ENCODE measurements at regions of chr10 and their contacts with region 1.

Region 1: DNA sequence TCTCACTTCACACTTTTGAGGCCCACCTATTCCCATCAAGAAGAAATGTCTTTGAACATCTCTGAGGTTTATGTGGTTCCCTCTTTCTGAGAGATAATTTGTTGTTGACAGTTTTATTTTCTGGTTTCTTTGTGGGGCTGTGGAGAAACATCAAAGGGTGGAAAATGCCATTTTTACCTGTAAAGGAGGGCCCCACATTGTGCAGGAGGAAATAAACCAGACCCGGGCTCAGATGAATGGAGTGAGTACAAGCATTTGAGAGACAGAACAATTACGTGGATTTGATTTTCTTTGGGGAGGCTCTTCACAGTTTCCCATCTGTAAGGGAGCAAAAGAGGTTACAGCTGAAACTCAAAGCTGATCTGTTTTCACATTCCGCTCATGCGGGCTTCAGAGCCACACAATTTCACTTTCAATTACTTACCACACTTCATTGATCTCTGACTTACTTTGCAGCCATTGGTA is 29.8 kb downstream of the ITPRIP start:
- DNase-seq: peak in 5 of 14 experiments; percentile 40 to 56 (median 54)
- ATAC-seq: peak; percentile 69
- H3K4me3 ChIP-seq: no peak overlapping the region
- H3K4me3 Mint-ChIP-seq: peak overlapping the region; percentile 63
- H3K27ac ChIP-seq: peak overlapping the region in 1 of 2 donors; percentile 44
- H3K27ac Mint-ChIP-seq: peak overlapping the region; percentile 71
- H3K4me1 ChIP-seq: peaks cover 78% of the 10 kb centered on the region
- H3K4me1 Mint-ChIP-seq: peaks cover 83% of the 10 kb centered on the region
- H3K27me3 ChIP-seq: no peaks in the 10 kb centered on the region
- H3K27me3 Mint-ChIP-seq: no peaks in the 10 kb centered on the region
- CTCF ChIP-seq: no peak

Region 2: DNA sequence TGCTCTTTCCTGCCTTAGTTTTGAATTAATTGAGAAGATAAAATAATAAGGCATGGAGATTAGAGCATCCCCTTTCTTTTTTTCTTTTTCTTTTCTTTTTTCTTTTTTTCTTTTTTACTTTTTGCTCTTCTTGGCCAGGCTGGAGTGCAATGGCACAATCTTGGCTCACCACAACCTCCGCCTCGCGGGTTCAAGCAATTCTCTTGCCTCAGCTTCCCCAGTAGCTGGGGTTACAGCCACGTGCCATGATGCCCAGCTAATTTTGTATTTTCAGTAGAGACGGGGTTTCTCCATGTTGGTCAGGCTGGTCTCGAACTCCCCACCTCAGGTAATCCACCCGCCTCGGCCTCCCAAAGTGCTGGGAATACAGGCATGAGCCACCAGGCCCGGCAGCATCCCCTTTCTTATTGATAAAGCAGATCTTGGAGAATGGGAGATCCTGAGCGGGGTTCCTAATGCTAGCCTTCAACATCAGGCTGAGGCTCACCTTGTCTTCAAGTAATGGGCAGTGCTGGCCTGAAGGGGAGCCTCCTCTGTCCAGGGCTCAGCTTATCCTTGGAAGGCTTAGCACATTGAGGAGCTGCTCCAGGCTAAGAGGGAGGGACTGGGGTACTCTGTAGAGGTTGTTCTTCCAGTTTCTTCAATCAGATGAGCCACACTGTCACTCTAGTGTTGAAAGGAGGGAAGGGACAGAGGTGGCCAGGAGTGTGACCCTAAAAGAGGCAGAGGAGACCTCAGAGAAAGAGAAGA is 11.6 kb before region 1 on chr10:
- CTCF ChIA-PET with region 1: interaction called, 37 read pairs
- POLR2A ChIA-PET with region 1: interaction called, 9 read pairs
- intact Hi-C with region 1: no loop called
- DNase-seq: no peak
- ATAC-seq: no peak
- H3K4me3 ChIP-seq: no peak overlapping the region
- H3K4me3 Mint-ChIP-seq: no peak overlapping the region
- H3K27ac ChIP-seq: no peak overlapping the region
- H3K27ac Mint-ChIP-seq: no peak overlapping the region
- H3K4me1 ChIP-seq: peaks cover 14% of the 10 kb centered on the region
- H3K4me1 Mint-ChIP-seq: peaks cover 35% of the 10 kb centered on the region
- H3K27me3 ChIP-seq: no peaks in the 10 kb centered on the region
- H3K27me3 Mint-ChIP-seq: no peaks in the 10 kb centered on the region
- CTCF ChIP-seq: no peak

Region 3: DNA sequence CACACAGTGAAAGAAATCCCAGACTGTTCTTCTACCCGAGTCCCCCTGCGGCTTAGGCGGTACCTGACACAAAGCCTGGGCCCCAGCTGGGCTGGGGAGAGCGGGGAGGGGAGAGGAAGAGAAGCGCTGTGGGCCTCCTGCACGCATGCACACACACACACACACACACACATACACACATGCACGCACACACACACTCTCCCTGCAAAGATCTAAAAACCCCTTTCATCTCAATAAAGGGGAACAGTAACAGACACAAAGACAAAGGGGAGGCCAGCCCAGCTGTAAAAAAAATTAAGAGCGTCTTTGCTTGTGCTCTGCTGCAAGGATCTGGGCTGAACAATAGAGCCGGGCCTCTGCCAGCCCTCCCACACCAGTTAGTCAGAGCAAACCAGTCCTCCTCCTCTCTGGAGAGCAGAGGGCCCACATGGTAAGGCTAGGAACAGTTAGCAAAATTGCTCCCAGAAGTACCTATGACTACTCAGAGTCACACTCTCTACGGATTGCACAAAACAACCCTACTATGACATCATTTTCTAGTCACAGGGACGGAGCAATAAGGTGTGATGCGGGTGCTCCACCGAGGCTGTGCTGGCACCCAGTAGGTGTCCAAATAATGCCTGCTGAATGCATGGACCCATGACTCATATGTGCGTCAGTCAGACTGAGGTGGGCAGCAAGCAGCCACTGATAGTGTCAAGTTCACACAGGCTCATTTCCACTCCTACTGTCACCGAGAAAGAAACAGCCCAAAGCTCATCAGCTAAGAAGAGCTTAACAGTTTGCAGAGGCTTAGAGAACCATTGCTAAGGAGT is 20.6 kb after region 1 on chr10:
- CTCF ChIA-PET with region 1: interaction called, 15 read pairs
- POLR2A ChIA-PET with region 1: interaction called, 99 read pairs
- intact Hi-C with region 1: loop called in 1 of 2 experiments (anchors 2 kb)
- DNase-seq: peak; percentile 44 to 88 (median 70)
- ATAC-seq: peak; percentile 65
- H3K4me3 ChIP-seq: peak overlapping the region; percentile 41
- H3K4me3 Mint-ChIP-seq: peak overlapping the region; percentile 84
- H3K27ac ChIP-seq: peak overlapping the region; percentile 75 to 81
- H3K27ac Mint-ChIP-seq: peak overlapping the region; percentile 88
- H3K4me1 ChIP-seq: peaks cover 97% of the 10 kb centered on the region
- H3K4me1 Mint-ChIP-seq: peaks cover 100% of the 10 kb centered on the region
- H3K27me3 ChIP-seq: no peaks in the 10 kb centered on the region
- H3K27me3 Mint-ChIP-seq: no peaks in the 10 kb centered on the region
- CTCF ChIP-seq: no peak

Region 4: DNA sequence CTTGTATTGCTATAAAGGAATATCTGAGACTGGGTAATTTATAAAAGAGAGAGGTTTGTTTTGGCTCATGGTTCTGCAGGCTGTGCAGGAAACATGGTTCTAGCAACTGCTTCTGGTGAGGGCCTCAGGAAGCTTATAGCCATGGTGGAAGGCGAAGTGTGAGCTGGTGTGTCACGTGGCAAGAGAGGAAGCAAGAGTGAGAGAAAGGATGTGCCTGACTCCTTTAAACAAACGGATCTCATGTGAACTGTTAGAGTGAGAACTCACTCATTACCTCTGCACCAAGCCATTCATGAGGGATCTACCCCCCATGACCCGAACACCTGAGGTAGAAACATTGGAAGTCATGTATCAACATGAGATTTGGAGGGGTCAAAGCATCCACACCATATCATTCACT is 37.5 kb after region 1 on chr10:
- CTCF ChIA-PET with region 1: interaction called, 107 read pairs
- POLR2A ChIA-PET with region 1: interaction called, 58 read pairs
- intact Hi-C with region 1: loop called (anchors 1 kb)
- DNase-seq: peak in 4 of 14 experiments; percentile 42 to 54 (median 45)
- ATAC-seq: peak; percentile 34
- H3K4me3 ChIP-seq: no peak overlapping the region
- H3K4me3 Mint-ChIP-seq: no peak overlapping the region
- H3K27ac ChIP-seq: no peak overlapping the region
- H3K27ac Mint-ChIP-seq: no peak overlapping the region
- H3K4me1 ChIP-seq: peaks cover 12% of the 10 kb centered on the region
- H3K4me1 Mint-ChIP-seq: peaks cover 11% of the 10 kb centered on the region
- H3K27me3 ChIP-seq: no peaks in the 10 kb centered on the region
- H3K27me3 Mint-ChIP-seq: no peaks in the 10 kb centered on the region
- CTCF ChIP-seq: no peak

Region 5: DNA sequence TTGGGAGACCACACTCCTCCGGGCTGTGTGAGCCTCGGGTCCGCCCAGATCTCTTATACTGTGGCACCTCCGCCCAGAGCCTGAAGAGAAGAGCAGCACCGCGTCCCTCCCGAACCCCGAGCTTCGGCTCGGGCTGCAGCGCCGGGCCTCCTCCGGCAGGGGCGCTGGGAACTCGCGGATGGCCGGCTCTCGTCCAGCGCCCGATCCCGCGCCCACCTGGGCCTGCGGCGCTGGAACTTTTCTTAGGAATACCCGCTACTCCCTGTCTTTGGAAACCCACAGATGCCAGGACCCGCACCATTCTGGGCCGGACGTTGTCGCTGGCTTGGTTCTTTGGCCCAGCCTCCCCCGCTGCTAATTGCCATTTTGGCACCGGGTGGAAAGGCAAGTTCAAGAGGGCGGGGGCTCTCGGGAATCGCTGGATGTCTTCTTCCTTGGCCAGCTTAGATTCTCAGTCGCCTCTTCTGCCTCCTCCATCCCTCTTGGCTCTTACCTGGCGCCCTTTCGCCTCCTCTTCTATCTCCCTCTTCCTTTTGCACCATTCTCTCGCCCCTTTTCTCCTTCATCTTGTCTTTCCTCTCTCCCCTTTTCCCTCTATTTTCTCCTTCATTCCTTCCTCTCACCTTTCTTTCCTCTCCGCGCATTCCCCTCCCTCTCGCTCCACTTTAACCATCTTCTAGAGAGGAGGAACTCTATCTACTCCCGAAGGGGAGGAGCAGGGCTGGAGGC is 330.6 kb after region 1 on chr10:
- CTCF ChIA-PET with region 1: no interaction called
- POLR2A ChIA-PET with region 1: no interaction called
- intact Hi-C with region 1: no loop called
- DNase-seq: no peak
- ATAC-seq: no peak
- H3K4me3 ChIP-seq: no peak overlapping the region
- H3K4me3 Mint-ChIP-seq: no peak overlapping the region
- H3K27ac ChIP-seq: no peak overlapping the region
- H3K27ac Mint-ChIP-seq: no peak overlapping the region
- H3K4me1 ChIP-seq: peaks cover 3% of the 10 kb centered on the region
- H3K4me1 Mint-ChIP-seq: peaks cover 6% of the 10 kb centered on the region
- H3K27me3 ChIP-seq: peaks cover 31 to 48% of the 10 kb centered on the region in 2 experiments
- H3K27me3 Mint-ChIP-seq: peaks cover 63% of the 10 kb centered on the region
- CTCF ChIP-seq: no peak